CD8-positive, alpha-beta memory T cell (primary cell): ENCODE measurements at regions of chr17 and their contacts with region 1.

Region 1: DNA sequence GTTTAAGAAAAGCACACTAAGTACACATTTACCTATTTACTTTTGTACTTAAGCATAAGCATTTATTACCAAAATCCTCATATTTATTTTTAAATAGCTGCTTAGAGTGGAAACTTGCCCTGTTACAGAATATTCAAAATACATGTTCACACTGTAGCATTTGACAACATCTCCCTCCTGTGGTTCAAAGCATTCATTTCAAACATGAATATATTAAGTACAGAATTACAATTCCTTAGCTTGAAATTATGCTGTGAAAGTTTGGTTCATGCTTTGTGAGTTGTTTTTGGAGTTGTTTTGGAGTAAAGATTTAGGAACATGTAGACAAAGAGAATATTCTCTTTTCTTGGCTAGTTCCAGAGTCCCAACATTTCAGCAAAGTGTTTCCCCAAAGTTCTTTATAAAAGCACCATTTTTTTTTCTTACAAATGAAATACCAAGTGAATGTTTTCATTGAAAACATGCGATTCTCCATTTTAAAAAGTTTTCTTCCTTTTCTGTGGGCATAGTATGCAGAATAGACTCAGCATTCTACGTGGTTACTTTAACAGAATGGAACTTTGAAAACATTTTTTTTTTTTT is 33.2 kb downstream of the TUBD1 start:
- DNase-seq: peak in 1 of 5 donors; percentile 24
- H3K4me3 ChIP-seq: no peak overlapping the region
- H3K4me3 Mint-ChIP-seq: no peak overlapping the region
- H3K27ac ChIP-seq: no peak overlapping the region
- H3K27ac Mint-ChIP-seq: peak overlapping the region in 1 of 8 donors; percentile 54
- H3K4me1 ChIP-seq: no peaks in the 10 kb centered on the region
- H3K4me1 Mint-ChIP-seq: peaks cover 2 to 6% (median 5%) of the 10 kb centered on the region in 3 donors
- H3K27me3 ChIP-seq: no peaks in the 10 kb centered on the region
- H3K27me3 Mint-ChIP-seq: no peaks in the 10 kb centered on the region

Region 2: DNA sequence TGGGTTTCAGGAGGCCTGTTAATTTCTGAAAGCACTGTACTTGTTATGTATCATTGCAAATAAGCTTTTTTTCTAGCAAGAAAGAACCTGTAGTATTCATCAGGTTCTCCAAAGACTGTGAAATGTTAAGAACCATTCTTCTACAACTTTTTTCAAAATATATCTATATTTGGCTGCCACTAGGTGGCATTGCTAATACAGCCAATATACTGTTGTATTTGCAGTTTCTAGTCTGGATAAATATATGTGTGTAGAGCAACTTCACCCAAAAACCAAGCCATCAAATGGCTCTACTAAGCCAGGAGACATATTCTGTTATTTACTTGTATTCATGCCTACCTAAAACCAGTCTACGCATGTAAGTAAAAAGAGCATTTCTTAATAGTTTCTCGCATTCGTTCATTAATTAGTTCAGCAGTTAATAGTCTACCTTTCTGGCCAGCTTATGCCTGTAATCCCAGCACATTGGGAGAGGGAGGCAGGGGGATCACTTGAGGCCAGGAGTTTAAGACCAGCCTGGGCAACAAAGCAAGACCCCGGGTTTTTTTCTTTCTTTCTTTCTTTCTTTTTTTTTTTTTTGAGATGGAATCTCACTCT is 112.6 kb before region 1 on chr17:
- CTCF ChIA-PET with region 1: interaction called, 10 read pairs
- POLR2A ChIA-PET with region 1: no interaction called
- DNase-seq: peak in 1 of 5 donors; percentile 9
- H3K4me3 ChIP-seq: no peak overlapping the region
- H3K4me3 Mint-ChIP-seq: no peak overlapping the region
- H3K27ac ChIP-seq: no peak overlapping the region
- H3K27ac Mint-ChIP-seq: peak overlapping the region in 1 of 8 donors; percentile 67
- H3K4me1 ChIP-seq: no peaks in the 10 kb centered on the region
- H3K4me1 Mint-ChIP-seq: peaks cover 0 to 8% (median under 1%) of the 10 kb centered on the region in 3 donors
- H3K27me3 ChIP-seq: no peaks in the 10 kb centered on the region
- H3K27me3 Mint-ChIP-seq: no peaks in the 10 kb centered on the region

Region 3: GRCh38 chr17:59846394-59847165 is 13.0 kb before region 1 on chr17:
- CTCF ChIA-PET with region 1: interaction called, 12 read pairs
- POLR2A ChIA-PET with region 1: no interaction called
- DNase-seq: no peak
- H3K4me3 ChIP-seq: no peak overlapping the region
- H3K4me3 Mint-ChIP-seq: peak overlapping the region in 3 of 7 donors; percentile 16 to 73 (median 46)
- H3K27ac ChIP-seq: no peak overlapping the region
- H3K27ac Mint-ChIP-seq: peak overlapping the region in 6 of 8 donors; percentile 10 to 85 (median 57)
- H3K4me1 ChIP-seq: peaks cover 50% of the 10 kb centered on the region
- H3K4me1 Mint-ChIP-seq: peaks cover 44 to 69% (median 64%) of the 10 kb centered on the region in 3 donors
- H3K27me3 ChIP-seq: no peaks in the 10 kb centered on the region
- H3K27me3 Mint-ChIP-seq: peaks cover 0 to 1% of the 10 kb centered on the region in 2 donors